ENCODE measurements at regions of chr5 and their contacts with region 1.

Region 1: DNA sequence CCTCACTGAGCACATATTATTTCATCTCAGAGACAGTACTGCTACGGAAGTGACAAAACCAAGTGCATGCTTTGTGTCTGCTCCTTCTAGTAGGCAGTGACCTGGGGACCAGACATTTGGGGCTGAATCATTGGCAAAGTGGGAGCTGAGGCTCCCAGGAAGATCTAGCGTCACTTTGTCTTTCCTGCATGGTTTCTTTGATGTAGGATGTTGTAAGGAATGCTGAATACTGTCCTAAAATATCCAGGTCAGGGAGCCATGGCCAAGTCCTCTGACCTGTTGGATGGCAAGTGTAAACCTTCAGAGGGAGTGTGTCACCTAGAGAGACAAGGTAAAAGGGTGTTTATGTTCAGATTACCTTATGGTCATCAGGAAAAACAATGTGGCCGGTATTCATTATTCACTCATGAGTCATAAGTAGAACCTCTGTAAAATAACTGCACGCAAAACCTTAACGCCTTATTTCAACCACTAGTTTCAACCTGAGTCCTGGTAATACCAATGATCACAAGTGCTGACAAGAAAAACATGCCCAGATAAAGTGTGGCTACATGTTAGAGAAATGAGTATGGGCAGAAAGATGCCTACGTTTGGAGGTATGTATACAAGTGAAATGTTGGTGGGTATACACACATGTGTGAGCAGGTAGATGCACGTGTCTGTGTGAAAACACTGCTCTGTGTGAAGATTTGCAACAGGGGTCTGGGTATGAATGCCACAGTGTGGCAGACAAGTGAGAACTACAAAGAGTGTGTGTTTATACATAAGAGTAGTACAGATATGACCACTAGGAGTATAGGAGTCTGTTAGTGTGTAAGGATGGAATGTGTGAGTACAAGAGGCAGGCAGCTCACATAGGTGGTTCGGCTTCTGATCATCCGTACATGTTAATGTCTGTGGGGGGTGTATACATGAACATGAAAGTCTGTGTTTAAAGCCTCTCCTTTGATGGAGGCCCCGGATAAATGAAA is 263.9 kb downstream of the SPOCK1 start:
- DNase-seq: peak; percentile 98
- H3K4me3 ChIP-seq: no peak overlapping the region
- H3K27ac ChIP-seq: peak overlapping the region; percentile 89
- H3K4me1 ChIP-seq: peaks cover 39% of the 10 kb centered on the region
- H3K27me3 ChIP-seq: no peaks in the 10 kb centered on the region
- CTCF ChIP-seq: peak; percentile 15 to 21

Region 2: DNA sequence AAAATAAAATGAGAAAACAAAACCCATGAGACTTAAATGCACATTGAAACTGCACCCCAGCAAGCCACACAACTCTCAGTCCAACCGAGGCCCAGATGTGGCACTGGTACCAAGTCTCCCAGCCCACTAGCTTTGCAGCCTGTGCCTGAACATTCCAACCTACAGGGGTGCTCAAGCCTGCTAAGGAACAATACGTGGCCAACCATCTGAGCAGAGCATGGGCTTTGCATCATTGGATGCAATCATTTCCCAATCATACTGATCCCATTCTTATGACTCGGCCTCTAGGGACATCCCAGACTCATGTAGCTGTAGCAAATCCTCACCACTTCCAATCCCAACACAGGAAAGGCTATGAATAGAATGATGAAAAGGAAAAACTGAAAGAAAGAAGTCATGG is 33.4 kb before region 1 on chr5:
- CTCF ChIA-PET with region 1: no interaction called
- dilution Hi-C with region 1: no loop called
- in situ Hi-C with region 1: no loop called
- intact Hi-C with region 1: loop called (anchors 1 kb)
- DNase-seq: peak; percentile 76
- H3K4me3 ChIP-seq: no peak overlapping the region
- H3K27ac ChIP-seq: no peak overlapping the region
- H3K4me1 ChIP-seq: peaks cover 28% of the 10 kb centered on the region
- H3K27me3 ChIP-seq: no peaks in the 10 kb centered on the region
- CTCF ChIP-seq: peak; percentile 27 to 42

Region 3: GRCh38 chr5:137310051-137310730 is 74.9 kb after region 1 on chr5:
- CTCF ChIA-PET with region 1: no interaction called
- dilution Hi-C with region 1: no loop called
- in situ Hi-C with region 1: no loop called
- intact Hi-C with region 1: loop called (anchors 2 kb)
- DNase-seq: peak; percentile 81
- H3K4me3 ChIP-seq: no peak overlapping the region
- H3K27ac ChIP-seq: peak overlapping the region; percentile 79
- H3K4me1 ChIP-seq: peaks cover 19% of the 10 kb centered on the region
- H3K27me3 ChIP-seq: no peaks in the 10 kb centered on the region
- CTCF ChIP-seq: no peak

Region 4: GRCh38 chr5:138579517-138579863 is 1344.2 kb after region 1 on chr5:
- CTCF ChIA-PET with region 1: no interaction called
- dilution Hi-C with region 1: no loop called
- in situ Hi-C with region 1: no loop called
- intact Hi-C with region 1: no loop called
- DNase-seq: no peak
- H3K4me3 ChIP-seq: no peak overlapping the region
- H3K27ac ChIP-seq: no peak overlapping the region
- H3K4me1 ChIP-seq: peaks cover 5% of the 10 kb centered on the region
- H3K27me3 ChIP-seq: no peaks in the 10 kb centered on the region
- CTCF ChIP-seq: no peak